ENCODE measurements at regions of chr16 and their contacts with region 1.

Region 1: DNA sequence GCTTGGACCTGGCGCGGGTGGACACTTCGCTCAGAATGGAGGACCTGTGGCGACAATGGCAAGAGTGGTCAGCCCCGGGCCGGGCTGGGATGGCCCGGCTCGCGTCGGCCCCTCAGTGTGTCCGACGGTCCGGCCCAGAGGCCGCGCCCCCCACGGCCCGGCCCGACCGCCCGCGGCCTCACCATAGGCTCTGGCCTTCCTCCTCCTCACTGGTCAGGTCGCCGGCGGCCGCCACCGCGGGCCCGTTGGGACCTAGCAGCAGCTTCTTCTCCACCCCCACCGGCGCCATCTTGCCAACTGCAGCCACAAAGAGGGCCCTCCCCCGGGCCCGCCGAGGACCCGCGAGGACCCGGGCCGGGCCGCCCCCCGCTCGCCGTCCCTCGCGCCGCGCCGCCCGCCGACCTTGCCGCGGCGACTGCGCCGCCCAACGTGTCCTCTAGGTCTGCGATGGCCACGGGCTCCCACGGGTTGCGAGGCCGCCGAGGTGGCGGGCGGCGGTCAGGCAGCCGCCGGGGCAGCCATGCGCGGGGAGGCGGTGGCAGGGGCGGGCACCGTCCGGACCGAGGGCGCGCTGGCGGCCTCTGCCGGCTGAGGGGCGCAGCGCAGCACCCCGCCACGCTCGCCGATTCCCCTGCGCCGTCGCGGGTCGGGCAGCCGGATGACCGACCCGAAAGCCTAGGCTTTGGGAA is at the start of gene DYNC1LI2:
- DNase-seq: peak; percentile 82
- H3K4me3 Mint-ChIP-seq: peak within 1 kb of the TSS; percentile 81
- H3K27ac Mint-ChIP-seq: peak within 1 kb of the TSS; percentile 73
- H3K4me1 Mint-ChIP-seq: peaks cover 42% of the 10 kb centered on the region
- H3K27me3 Mint-ChIP-seq: peaks cover 15% of the 10 kb centered on the region
- total RNA-seq, gene DYNC1LI2: 50.1 to 52.9 TPM

Region 2: GRCh38 chr16:66728117-66728787 is 23.2 kb before region 1 on chr16:
- CTCF ChIA-PET with region 1: interaction called, 18 read pairs
- POLR2A ChIA-PET with region 1: no interaction called
- DNase-seq: no peak
- H3K4me3 Mint-ChIP-seq: no peak overlapping the region
- H3K27ac Mint-ChIP-seq: no peak overlapping the region
- H3K4me1 Mint-ChIP-seq: peaks cover 2% of the 10 kb centered on the region
- H3K27me3 Mint-ChIP-seq: no peaks in the 10 kb centered on the region

Measured in activated CD4-positive, alpha-beta memory T cell treated with anti-CD3 and anti-CD28 coated beads, Interleukin-2, amount 10 ng/mL, durations not matched to agents 7 days and 5 days (primary cell).